ENCODE measurements at regions of chr2 and their contacts with region 1.

Region 1: DNA sequence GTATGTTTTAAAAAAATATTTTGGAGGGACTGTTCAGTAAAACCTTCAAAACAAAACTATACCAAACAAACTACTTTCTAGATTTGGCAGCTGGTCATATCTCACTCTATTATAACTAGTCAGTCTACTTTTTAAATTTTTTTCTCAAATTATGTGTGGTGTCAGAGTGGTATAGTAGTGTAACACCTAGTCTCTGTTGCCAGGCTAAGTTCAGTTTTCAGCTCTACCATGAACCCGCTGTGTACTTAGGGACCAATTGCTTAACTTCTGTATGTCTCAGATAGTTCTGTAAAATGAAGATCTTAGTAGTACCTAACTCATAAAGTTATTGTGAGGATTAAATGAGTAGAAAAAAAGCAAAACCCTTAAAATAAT is 54.3 kb downstream of the GPD2 start:
- DNase-seq: no peak
- H3K4me3 Mint-ChIP-seq: no peak overlapping the region
- H3K27ac Mint-ChIP-seq: no peak overlapping the region
- H3K4me1 Mint-ChIP-seq: peaks cover 34% of the 10 kb centered on the region
- H3K27me3 Mint-ChIP-seq: no peaks in the 10 kb centered on the region

Region 2: DNA sequence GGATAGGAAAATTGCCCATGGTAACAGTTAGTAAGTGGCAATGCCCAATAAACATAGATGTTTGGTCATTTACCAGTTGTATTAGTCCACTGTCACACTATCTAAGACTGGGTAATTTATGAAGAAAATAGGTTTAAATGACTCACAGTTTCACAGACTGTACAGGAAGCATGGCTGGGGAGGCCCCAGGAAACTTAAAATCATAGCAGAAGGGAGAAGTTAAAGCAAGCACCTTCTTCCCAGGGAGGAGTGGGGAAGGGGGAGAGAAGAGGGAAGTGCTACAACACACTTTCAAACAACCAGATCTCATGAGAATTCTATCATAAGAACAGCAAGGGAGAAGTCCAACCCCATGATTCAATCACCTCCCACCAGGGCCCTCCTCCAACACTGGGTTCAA is 181.3 kb before region 1 on chr2:
- CTCF ChIA-PET with region 1: no interaction called
- POLR2A ChIA-PET with region 1: no interaction called
- intact Hi-C with region 1: no loop called
- DNase-seq: no peak
- H3K4me3 Mint-ChIP-seq: no peak overlapping the region
- H3K27ac Mint-ChIP-seq: no peak overlapping the region
- H3K4me1 Mint-ChIP-seq: peaks cover 6% of the 10 kb centered on the region
- H3K27me3 Mint-ChIP-seq: peaks cover 26% of the 10 kb centered on the region

Region 3: GRCh38 chr2:156435715-156436496 is 54.5 kb before region 1 on chr2 and contains the start of gene GPD2:
- CTCF ChIA-PET with region 1: no interaction called
- POLR2A ChIA-PET with region 1: no interaction called
- intact Hi-C with region 1: loop called (anchors 2 kb)
- DNase-seq: peak; percentile 67
- H3K4me3 Mint-ChIP-seq: peak within 1 kb of the TSS; percentile 89
- H3K27ac Mint-ChIP-seq: peak within 1 kb of the TSS; percentile 82
- H3K4me1 Mint-ChIP-seq: peaks cover 28% of the 10 kb centered on the region
- H3K27me3 Mint-ChIP-seq: no peaks in the 10 kb centered on the region
- total RNA-seq, gene GPD2: 27.3 to 28.6 TPM

Region 4: GRCh38 chr2:156476850-156477206 is 13.6 kb before region 1 on chr2:
- CTCF ChIA-PET with region 1: interaction called, 3 read pairs
- POLR2A ChIA-PET with region 1: no interaction called
- intact Hi-C with region 1: loop called (anchors 1 kb)
- DNase-seq: peak; percentile 35
- H3K4me3 Mint-ChIP-seq: no peak overlapping the region
- H3K27ac Mint-ChIP-seq: peak overlapping the region; percentile 53
- H3K4me1 Mint-ChIP-seq: peaks cover 38% of the 10 kb centered on the region
- H3K27me3 Mint-ChIP-seq: no peaks in the 10 kb centered on the region

Region 5: GRCh38 chr2:156526950-156527636 is 36.6 kb after region 1 on chr2:
- CTCF ChIA-PET with region 1: no interaction called
- POLR2A ChIA-PET with region 1: interaction called, 4 read pairs
- intact Hi-C with region 1: loop called (anchors 5 kb)
- DNase-seq: no peak
- H3K4me3 Mint-ChIP-seq: no peak overlapping the region
- H3K27ac Mint-ChIP-seq: no peak overlapping the region
- H3K4me1 Mint-ChIP-seq: peaks cover 9% of the 10 kb centered on the region
- H3K27me3 Mint-ChIP-seq: no peaks in the 10 kb centered on the region

Measured in activated CD4-positive, alpha-beta memory T cell treated with anti-CD3 and anti-CD28 coated beads for 36 hours (primary cell).